ENCODE measurements at regions of chr2 and their contacts with region 1.

Region 1: DNA sequence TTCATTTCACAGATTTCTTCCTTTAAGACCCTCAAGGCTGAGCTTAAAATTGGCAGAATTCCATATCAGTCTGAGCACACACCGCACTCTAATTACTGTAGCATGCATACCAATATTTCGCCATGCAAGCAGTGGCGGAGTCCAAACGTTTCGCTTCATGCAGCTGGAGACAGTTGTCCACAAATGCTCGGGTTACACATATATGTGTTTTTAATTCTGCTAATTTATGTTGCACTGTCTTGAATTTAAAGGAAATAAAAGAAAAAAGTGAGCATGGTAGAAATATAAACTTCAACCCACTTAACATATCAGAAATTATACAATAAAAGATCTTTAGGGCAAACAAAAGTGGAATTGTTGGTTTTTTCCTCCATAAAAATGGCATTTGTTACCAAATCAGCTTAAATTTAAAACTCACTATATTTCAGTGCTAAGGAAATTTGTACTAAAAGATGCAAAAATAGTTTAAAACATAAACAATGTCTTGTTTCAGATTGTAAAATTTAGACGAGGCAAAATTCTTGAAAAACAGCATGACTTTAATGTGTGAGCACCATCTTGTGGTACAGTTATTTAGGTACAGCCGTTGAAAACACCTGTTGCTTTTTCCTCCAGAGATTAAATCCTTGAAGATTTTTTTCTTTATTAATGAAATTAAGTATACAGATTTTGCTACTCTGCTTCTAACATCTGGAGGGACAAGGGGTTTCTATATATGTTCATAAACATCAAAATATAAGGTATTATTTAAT is 24.1 kb upstream of the KANSL1L start:
- DNase-seq: no peak
- H3K4me3 ChIP-seq: peak overlapping the region; percentile 53
- H3K27ac ChIP-seq: no peak overlapping the region
- H3K4me1 ChIP-seq: peaks cover 7% of the 10 kb centered on the region
- H3K27me3 ChIP-seq: no peaks in the 10 kb centered on the region
- CTCF ChIP-seq: peak; percentile 84

Region 2: GRCh38 chr2:209977386-209978239 is 217.7 kb before region 1 on chr2:
- intact Hi-C with region 1: loop called (anchors 5 kb)
- DNase-seq: no peak
- H3K4me3 ChIP-seq: no peak overlapping the region
- H3K27ac ChIP-seq: no peak overlapping the region
- H3K4me1 ChIP-seq: no peaks in the 10 kb centered on the region
- H3K27me3 ChIP-seq: peaks cover 23% of the 10 kb centered on the region
- CTCF ChIP-seq: peak; percentile 79

Region 3: DNA sequence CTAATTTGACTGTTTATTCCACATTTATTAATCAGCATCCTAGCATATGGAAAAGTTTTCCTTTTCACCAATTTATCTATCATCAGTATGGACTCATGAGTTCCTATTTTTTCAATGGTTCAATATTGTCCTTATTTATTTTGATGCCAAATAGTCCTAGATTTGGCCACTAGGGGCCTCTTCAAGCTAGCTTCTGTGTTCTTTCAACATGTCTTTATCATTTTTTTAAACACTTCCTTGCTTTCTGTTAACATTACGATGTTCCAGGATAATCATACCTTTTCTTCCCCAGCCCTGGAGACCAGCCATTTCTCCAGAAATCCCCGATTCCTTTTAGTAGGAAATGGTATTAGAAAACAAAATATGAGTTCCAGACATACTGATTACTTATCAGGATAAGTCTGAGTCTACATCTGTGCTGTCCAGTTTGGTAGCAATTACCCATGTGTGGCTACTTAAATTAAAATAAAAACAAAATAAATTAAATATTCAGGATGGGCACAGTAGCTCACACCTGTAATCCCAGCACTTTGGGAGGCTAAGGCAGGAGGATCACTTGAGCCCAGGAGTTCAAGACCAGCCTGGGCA is 122.3 kb before region 1 on chr2:
- intact Hi-C with region 1: loop called (anchors 5 kb)
- DNase-seq: no peak
- H3K4me3 ChIP-seq: no peak overlapping the region
- H3K27ac ChIP-seq: no peak overlapping the region
- H3K4me1 ChIP-seq: no peaks in the 10 kb centered on the region
- H3K27me3 ChIP-seq: no peaks in the 10 kb centered on the region
- CTCF ChIP-seq: peak; percentile 64